CD4-positive, alpha-beta memory T cell (primary cell): ENCODE measurements at regions of chr17 and their contacts with region 1.

Region 1: GRCh38 chr17:47776330-47777197 is 43.5 kb downstream of the TBX21 start:
- DNase-seq: peak; percentile 46 to 56 (median 48)
- H3K4me3 ChIP-seq: no peak overlapping the region
- H3K4me3 Mint-ChIP-seq: no peak overlapping the region
- H3K27ac ChIP-seq: no peak overlapping the region
- H3K27ac Mint-ChIP-seq: no peak overlapping the region
- H3K4me1 ChIP-seq: no peaks in the 10 kb centered on the region
- H3K4me1 Mint-ChIP-seq: peaks cover 0 to 5% (median 3%) of the 10 kb centered on the region in 4 donors
- H3K27me3 ChIP-seq: peaks cover 23% of the 10 kb centered on the region
- H3K27me3 Mint-ChIP-seq: peaks cover 33 to 35% of the 10 kb centered on the region in 2 donors

Region 2: GRCh38 chr17:47733047-47733673 is 43.4 kb before region 1 on chr17 and contains the start of gene TBX21:
- CTCF ChIA-PET with region 1: interaction called, 4 read pairs
- POLR2A ChIA-PET with region 1: no interaction called
- intact Hi-C with region 1: loop called (anchors 1 kb)
- DNase-seq: peak; percentile 87 to 93 (median 88)
- H3K4me3 ChIP-seq: peak within 1 kb of the TSS; percentile 72 to 83
- H3K4me3 Mint-ChIP-seq: peak within 1 kb of the TSS; percentile 92 to 100 (median 100)
- H3K27ac ChIP-seq: peak within 1 kb of the TSS; percentile 70
- H3K27ac Mint-ChIP-seq: peak within 1 kb of the TSS; percentile 85 to 99 (median 97)
- H3K4me1 ChIP-seq: peaks cover 40% of the 10 kb centered on the region
- H3K4me1 Mint-ChIP-seq: peaks cover 31 to 83% (median 44%) of the 10 kb centered on the region in 4 donors
- H3K27me3 ChIP-seq: no peaks in the 10 kb centered on the region
- H3K27me3 Mint-ChIP-seq: peaks cover 0 to 1% of the 10 kb centered on the region in 2 donors
- total RNA-seq, gene TBX21: 15.8 to 17.9 TPM

Region 3: GRCh38 chr17:47789611-47790561 is 13.3 kb after region 1 on chr17:
- CTCF ChIA-PET with region 1: no interaction called
- POLR2A ChIA-PET with region 1: no interaction called
- intact Hi-C with region 1: loop called (anchors 1 kb)
- DNase-seq: peak in 4 of 5 donors; percentile 39 to 54 (median 44)
- H3K4me3 ChIP-seq: peak overlapping the region in 1 of 2 donors; percentile 37
- H3K4me3 Mint-ChIP-seq: peak overlapping the region; percentile 31 to 86 (median 78)
- H3K27ac ChIP-seq: no peak overlapping the region
- H3K27ac Mint-ChIP-seq: peak overlapping the region in 1 of 7 donors; percentile 43
- H3K4me1 ChIP-seq: peaks cover 9% of the 10 kb centered on the region
- H3K4me1 Mint-ChIP-seq: peaks cover 2 to 18% (median 10%) of the 10 kb centered on the region in 4 donors
- H3K27me3 ChIP-seq: peaks cover 11% of the 10 kb centered on the region
- H3K27me3 Mint-ChIP-seq: peaks cover 34 to 36% of the 10 kb centered on the region in 2 donors

Region 4: GRCh38 chr17:47802341-47803022 is 25.9 kb after region 1 on chr17:
- CTCF ChIA-PET with region 1: interaction called, 10 read pairs
- POLR2A ChIA-PET with region 1: no interaction called
- intact Hi-C with region 1: loop called (anchors 1 kb)
- DNase-seq: peak; percentile 52 to 62 (median 57)
- H3K4me3 ChIP-seq: no peak overlapping the region
- H3K4me3 Mint-ChIP-seq: no peak overlapping the region
- H3K27ac ChIP-seq: no peak overlapping the region
- H3K27ac Mint-ChIP-seq: peak overlapping the region in 2 of 7 donors; percentile 56 to 57
- H3K4me1 ChIP-seq: no peaks in the 10 kb centered on the region
- H3K4me1 Mint-ChIP-seq: no peaks in the 10 kb centered on the region
- H3K27me3 ChIP-seq: no peaks in the 10 kb centered on the region
- H3K27me3 Mint-ChIP-seq: peaks cover 1 to 3% of the 10 kb centered on the region in 2 donors